Dendritic cell treated with granulocyte-macrophage colony-stimulating factor and Interleukin-4, amounts not matched to agents 40 ng/mL and 50 ng/mL, for 4 days (primary cell): ENCODE measurements at regions of chr4 and their contacts with region 1.

Region 1: GRCh38 chr4:122577808-122578781 is 42.8 kb downstream of the IL21 start:
- H3K4me3 Mint-ChIP-seq: no peak overlapping the region
- H3K27ac Mint-ChIP-seq: no peak overlapping the region
- H3K4me1 Mint-ChIP-seq: peaks cover 15% of the 10 kb centered on the region
- H3K27me3 Mint-ChIP-seq: peaks cover 3% of the 10 kb centered on the region

Region 2: DNA sequence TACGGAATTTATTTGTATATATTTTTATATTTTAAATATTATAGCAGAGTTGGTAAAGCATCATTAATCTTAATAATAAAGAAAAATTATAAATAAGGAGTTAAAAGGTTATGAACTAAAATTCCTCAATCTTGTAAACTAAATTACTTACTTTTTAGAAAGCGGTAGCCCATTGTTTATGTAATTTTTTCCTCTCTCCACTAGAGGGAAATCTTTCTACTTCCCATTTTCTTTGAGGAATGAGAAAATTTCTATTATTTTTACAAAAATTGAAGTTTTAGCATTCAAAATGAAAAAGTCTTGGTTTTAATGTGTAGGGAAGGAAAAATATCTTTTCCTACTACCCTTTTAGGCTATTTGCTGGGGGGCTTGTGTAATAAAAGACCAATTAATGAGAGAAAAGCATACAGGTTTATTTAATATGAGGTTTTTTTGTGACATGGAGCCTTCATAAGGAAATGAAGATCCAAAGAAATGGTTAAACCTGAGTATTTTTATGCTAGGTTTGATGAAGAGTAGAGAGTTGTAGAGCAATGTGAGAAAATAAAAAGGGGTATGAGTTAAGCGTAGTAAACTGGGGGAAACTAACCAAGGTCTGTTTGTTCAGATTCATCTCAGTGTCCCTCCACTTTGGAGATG is 268.0 kb before region 1 on chr4:
- intact Hi-C with region 1: loop called (anchors 10 kb)
- H3K4me3 Mint-ChIP-seq: no peak overlapping the region
- H3K27ac Mint-ChIP-seq: no peak overlapping the region
- H3K4me1 Mint-ChIP-seq: peaks cover 5% of the 10 kb centered on the region
- H3K27me3 Mint-ChIP-seq: no peaks in the 10 kb centered on the region